Esophagus muscularis mucosa (tissue), 4 donors: ENCODE measurements at regions of chr10 and their contacts with region 1.

Region 1: DNA sequence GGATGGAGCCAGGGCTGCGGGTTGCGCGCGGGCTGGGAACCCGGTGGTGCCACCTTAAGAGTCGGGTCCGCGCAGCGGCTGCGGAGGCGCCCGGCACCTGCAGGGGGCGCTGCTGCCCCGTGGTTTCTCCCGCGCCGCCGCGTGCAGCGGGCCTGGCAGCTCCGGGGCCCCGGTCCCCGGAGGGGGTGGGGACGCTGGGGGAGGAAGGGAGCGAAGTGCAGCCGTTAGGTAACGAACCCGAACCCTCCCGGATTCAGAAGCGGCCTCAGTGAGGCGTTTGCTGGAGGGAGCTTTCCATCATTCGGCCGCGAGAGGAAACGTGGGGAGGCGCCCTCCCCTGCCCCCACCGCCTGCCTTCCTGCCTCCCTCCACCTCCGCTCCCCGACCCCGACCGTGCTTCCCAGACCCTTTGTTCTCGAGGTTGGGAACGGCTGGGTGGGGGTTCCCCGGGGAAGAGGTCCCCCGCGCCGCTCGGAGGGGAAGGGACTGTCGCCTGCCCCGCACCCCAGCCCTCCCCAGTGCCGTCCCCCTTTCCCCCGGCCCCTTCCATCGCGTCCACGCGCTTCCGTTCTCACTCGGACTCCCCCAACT is 29.6 kb downstream of the SKIDA1 start:
- DNase-seq: no peak
- H3K4me3 ChIP-seq: peak overlapping the region; percentile 74 to 85 (median 76)
- H3K27ac ChIP-seq: peak overlapping the region; percentile 70 to 80 (median 76)
- H3K4me1 ChIP-seq: peaks cover 16 to 43% (median 36%) of the 10 kb centered on the region in 4 donors
- H3K27me3 ChIP-seq: no peaks in the 10 kb centered on the region
- CTCF ChIP-seq: peak in 2 of 3 experiments; percentile 95 to 99
- EP300 ChIP-seq: no peak
- POLR2A ChIP-seq: no peak

Region 2: DNA sequence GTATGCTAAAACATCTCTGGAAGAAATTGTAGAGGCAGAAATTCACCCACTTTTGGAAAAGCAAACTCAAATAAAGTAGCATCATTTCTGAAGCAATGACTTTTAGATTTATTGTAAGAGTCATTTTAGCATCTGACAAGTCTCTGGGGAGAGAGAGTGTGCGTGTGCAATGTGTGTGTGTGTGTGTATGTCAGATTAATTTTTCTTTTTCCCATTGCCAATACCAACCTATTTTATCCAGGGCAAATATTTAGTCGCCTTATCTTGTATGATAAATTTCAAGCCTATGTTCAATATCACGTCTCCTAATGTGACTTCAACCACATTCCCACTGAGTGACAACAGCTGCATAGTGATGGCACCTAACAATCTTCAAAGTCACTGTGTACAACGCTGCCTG is 700.5 kb before region 1 on chr10:
- intact Hi-C with region 1: no loop called
- DNase-seq: no peak
- H3K4me3 ChIP-seq: no peak overlapping the region
- H3K27ac ChIP-seq: no peak overlapping the region
- H3K4me1 ChIP-seq: no peaks in the 10 kb centered on the region
- H3K27me3 ChIP-seq: no peaks in the 10 kb centered on the region
- CTCF ChIP-seq: no peak
- EP300 ChIP-seq: no peak
- POLR2A ChIP-seq: no peak

Region 3: DNA sequence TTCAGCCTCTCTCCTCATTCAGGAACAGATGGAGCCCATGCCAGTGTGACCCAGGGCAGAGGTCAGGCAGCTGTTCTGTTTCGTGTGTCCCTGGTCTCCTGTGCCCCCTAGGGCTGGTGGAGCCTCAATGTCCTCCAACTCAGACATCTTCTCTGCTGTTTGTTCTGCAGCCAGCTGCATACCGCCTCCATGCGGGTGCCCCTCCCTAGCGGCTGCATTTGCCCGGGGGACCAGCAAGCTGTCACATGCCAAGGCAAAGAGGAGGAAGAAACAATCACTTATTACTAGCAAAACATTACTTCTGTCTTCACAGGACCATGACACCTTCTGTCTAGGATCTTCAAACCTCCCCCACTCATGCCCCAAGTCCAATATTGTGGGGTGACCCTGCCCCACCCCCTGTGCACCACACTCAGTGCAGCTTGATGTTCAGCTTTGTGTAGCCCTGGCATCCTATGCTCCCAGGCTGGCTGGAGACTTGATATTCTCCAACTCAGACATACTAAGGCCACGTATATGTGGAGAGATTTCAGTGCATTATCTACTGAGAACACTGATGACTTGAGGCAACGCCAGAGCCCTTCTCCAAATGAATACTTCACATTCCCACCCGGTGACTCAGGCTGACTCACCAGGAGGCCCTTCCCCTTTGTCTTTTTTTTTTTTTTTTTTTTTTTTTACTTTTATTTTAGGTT is 159.2 kb before region 1 on chr10:
- intact Hi-C with region 1: loop called (anchors 10 kb)
- DNase-seq: no peak
- H3K4me3 ChIP-seq: no peak overlapping the region
- H3K27ac ChIP-seq: peak overlapping the region; percentile 16 to 48 (median 26)
- H3K4me1 ChIP-seq: peaks cover 21 to 35% (median 27%) of the 10 kb centered on the region in 4 donors
- H3K27me3 ChIP-seq: no peaks in the 10 kb centered on the region
- CTCF ChIP-seq: no peak
- EP300 ChIP-seq: no peak
- POLR2A ChIP-seq: no peak

Region 4: DNA sequence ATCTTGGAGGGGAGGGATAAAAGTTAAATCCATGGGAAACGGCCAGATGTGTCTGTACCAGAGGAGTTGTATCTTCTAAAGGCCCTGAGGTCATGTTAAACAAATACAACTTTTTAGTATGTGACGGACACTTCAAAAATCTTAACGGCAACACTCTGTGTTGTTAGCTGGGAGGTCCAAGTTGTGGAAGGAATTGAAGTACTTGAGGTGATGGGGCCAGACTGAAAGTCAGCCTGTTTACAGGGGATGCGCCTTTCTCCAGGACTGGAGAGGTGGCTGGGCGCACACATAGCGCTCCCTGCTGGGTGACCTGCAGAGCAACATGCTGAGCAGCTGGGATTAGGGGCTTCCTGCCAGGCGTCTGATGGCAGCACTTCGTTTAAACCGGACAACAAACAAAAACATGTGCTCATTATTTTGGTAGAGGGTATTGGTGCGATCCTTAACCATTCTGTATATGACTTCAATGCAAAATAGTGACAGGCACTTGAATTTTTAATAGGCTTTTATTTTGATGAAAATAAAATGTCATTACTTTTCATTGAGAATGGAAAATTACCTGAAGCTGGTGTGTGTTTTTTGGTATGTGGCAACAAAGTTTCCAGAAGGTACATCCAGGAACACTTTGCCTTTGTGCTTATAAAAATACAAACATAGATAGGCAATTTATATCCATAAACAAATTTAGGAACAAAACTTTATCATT is 236.4 kb after region 1 on chr10:
- intact Hi-C with region 1: loop called (anchors 2 kb)
- DNase-seq: no peak
- H3K4me3 ChIP-seq: no peak overlapping the region
- H3K27ac ChIP-seq: no peak overlapping the region
- H3K4me1 ChIP-seq: peaks cover 0 to 7% (median 4%) of the 10 kb centered on the region in 4 donors
- H3K27me3 ChIP-seq: no peaks in the 10 kb centered on the region
- CTCF ChIP-seq: peak; percentile 82 to 92 (median 87)
- EP300 ChIP-seq: no peak
- POLR2A ChIP-seq: no peak

Region 5: DNA sequence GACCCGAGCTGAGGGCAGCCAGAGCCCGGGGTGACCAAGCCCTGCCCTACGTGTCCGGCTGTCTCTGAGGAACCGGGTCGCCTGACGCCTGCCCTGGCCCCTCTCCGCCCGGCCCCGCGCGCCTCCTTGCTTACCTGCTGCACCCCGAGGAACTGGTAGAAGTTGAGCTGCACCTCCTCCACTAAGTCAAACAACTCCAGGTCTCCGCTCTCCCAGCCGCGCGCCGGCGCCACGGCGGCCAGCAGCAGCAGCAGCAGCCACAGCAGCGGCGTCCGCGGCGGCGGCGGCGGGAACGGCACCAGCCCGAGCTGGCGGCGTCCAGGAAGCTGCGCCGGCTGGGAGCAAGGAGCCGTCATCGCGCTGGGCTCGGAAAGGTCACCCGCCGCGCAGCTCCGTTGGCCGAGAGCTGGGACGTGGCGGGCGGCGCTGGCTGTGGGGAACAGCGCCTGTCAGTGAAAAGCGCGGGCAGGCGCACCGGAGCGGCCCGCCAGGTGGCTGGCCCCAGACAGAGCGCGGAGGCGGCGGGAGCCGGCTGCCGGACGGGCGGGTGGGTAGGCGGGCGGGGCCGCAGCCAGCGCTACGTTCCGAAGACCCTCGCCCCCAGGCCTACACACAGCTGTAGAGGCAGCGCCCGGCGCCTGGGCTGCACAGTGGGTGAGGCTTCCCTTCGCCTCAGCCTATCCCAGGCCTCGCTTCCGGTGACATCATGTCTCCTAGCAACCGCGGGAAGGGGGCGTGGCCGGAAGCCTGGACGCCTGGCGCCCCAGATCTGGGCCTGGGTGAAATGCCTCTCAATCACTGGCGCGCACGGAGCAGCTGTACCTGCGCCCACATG is 507.4 kb after region 1 on chr10 and contains the start of gene DNAJC1:
- intact Hi-C with region 1: loop called (anchors 10 kb)
- DNase-seq: peak; percentile 99
- H3K4me3 ChIP-seq: peak within 1 kb of the TSS; percentile 71 to 93 (median 80)
- H3K27ac ChIP-seq: peak within 1 kb of the TSS; percentile 93 to 99 (median 94)
- H3K4me1 ChIP-seq: peaks cover 0 to 33% (median 26%) of the 10 kb centered on the region in 4 donors
- H3K27me3 ChIP-seq: no peaks in the 10 kb centered on the region
- CTCF ChIP-seq: peak in 1 of 3 experiments; percentile 28
- EP300 ChIP-seq: no peak
- POLR2A ChIP-seq: peak; percentile 83
- total RNA-seq, gene DNAJC1: 46.5 to 70.6 (median 61.5) TPM